ENCODE measurements at regions of chr6 and their contacts with region 1.

Region 1: GRCh38 chr6:105484238-105485161 is 81.6 kb upstream of the PREP start:
- DNase-seq: no peak
- H3K4me3 ChIP-seq: no peak overlapping the region
- H3K27ac ChIP-seq: no peak overlapping the region
- H3K4me1 ChIP-seq: peaks cover 0 to 22% (median 12%) of the 10 kb centered on the region in 4 donors
- H3K27me3 ChIP-seq: no peaks in the 10 kb centered on the region
- CTCF ChIP-seq: peak; percentile 50 to 92 (median 82)
- EP300 ChIP-seq: no peak
- POLR2A ChIP-seq: no peak

Region 2: DNA sequence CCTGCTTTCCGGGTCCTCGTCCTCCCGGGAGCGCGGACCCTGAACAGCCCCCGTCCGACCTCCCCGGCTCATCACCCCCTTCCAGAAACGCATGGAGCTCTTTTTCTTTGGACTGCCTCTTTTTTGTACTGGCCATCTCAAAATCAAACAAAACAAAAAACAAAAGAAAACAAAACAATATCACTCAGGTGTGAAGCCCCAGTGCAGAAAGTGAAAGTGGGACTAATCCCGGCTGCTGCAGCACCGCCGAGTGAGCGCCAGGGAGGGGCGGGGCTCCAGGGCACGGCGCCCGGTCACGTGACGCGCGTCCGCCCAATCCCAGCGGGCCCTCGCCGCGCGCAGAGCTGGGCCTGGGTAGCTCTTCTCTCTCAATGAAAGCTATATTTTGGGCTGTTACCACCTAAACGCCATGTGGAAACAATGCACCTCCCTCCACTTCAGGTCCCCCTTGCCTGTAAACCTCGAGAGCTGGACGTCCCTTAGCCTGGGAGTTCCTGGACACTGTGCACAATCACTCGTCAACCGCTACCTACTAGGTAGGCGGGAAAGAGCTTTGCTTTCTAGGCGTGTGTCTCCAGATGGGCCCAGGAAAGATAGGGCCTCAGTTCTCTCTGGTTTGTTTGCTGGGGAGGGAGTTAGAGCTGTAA is 507.9 kb after region 1 on chr6:
- intact Hi-C with region 1: loop called (anchors 10 kb)
- DNase-seq: peak; percentile 84
- H3K4me3 ChIP-seq: peak overlapping the region; percentile 29 to 56 (median 46)
- H3K27ac ChIP-seq: peak overlapping the region in 2 of 4 donors; percentile 11 to 32
- H3K4me1 ChIP-seq: peaks cover 0 to 37% (median 32%) of the 10 kb centered on the region in 4 donors
- H3K27me3 ChIP-seq: peaks cover 46 to 100% (median 86%) of the 10 kb centered on the region in 3 donors
- CTCF ChIP-seq: no peak
- EP300 ChIP-seq: no peak
- POLR2A ChIP-seq: no peak

Region 3: DNA sequence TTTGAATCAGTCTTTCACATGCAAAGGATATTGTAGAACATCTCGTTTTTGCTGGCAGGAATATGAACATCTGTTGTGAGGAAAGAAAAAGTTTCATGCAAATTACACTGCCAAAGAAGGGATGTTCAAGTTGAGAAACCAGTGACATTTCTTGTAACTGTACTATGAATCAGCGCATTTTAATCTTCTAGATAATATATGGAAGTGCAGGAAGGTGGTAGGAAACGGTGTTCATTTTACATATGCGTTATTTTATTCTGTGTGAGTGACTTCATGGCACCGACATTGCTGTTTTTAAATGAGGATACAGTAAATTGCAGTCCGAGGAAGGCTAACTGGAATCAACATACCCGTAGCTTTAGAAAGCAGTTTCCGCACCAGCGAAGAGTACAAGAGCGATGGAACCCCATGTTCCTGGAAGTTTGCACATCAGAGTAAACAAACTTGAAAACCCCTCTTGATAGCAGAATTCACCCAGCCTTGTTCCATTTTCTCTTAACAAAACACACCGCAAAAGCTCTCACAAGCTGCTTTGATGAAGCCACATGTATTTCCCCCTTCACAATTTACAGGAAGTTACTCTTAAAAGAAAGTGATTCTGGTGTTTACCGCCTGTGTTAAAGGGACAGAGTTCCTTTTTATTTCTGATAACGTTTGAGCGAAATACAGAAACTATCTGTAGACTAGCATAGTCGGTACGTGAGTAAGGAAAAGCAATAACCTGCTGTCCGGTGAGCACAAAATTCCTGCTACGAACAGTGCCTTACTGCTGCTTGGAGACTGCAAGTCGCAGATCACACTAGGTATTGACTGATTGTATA is 613.1 kb after region 1 on chr6:
- intact Hi-C with region 1: loop called (anchors 10 kb)
- DNase-seq: no peak
- H3K4me3 ChIP-seq: peak overlapping the region; percentile 17 to 42 (median 27)
- H3K27ac ChIP-seq: peak overlapping the region; percentile 38 to 73 (median 50)
- H3K4me1 ChIP-seq: peaks cover 0 to 6% (median 0%) of the 10 kb centered on the region in 4 donors
- H3K27me3 ChIP-seq: peaks cover 0 to 59% (median 22%) of the 10 kb centered on the region in 3 donors
- CTCF ChIP-seq: no peak
- EP300 ChIP-seq: no peak
- POLR2A ChIP-seq: no peak

Region 4: GRCh38 chr6:106223300-106223930 is 738.9 kb after region 1 on chr6:
- intact Hi-C with region 1: loop called (anchors 5 kb)
- DNase-seq: no peak
- H3K4me3 ChIP-seq: no peak overlapping the region
- H3K27ac ChIP-seq: no peak overlapping the region
- H3K4me1 ChIP-seq: no peaks in the 10 kb centered on the region
- H3K27me3 ChIP-seq: no peaks in the 10 kb centered on the region
- CTCF ChIP-seq: peak in 3 of 4 experiments; percentile 31 to 45 (median 39)
- EP300 ChIP-seq: no peak
- POLR2A ChIP-seq: no peak

Region 5: DNA sequence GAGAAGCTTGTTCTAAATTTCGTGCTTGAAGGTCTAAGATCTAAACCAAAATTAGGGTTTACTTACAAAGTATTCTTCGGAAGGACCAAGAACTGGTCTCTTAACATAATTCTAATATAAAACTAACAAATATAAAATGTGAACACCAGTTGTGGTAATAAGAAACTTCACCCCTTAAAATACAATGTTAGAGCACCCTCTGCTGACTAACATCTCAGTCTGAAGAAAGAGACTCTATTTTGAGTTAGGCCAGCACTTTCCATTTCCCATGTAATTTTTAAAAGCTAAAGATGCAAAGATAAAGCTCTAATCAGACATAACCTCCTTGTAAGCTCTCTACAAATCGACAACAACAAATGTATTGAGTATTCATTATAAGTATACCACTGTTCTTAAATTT is 816.4 kb after region 1 on chr6:
- intact Hi-C with region 1: loop called (anchors 5 kb)
- DNase-seq: no peak
- H3K4me3 ChIP-seq: no peak overlapping the region
- H3K27ac ChIP-seq: no peak overlapping the region
- H3K4me1 ChIP-seq: no peaks in the 10 kb centered on the region
- H3K27me3 ChIP-seq: no peaks in the 10 kb centered on the region
- CTCF ChIP-seq: peak in 3 of 4 experiments; percentile 12 to 33 (median 26)
- EP300 ChIP-seq: no peak
- POLR2A ChIP-seq: no peak